T-cell (primary cell): ENCODE measurements at regions of chr17 and their contacts with region 1.

Region 1: GRCh38 chr17:73192894-73193701 is at the start of gene COG1:
- DNase-seq: peak; percentile 60 to 93 (median 83)
- ATAC-seq: peak; percentile 89 to 95 (median 90)
- H3K4me3 ChIP-seq: peak within 1 kb of the TSS; percentile 81 to 89
- H3K4me3 Mint-ChIP-seq: peak within 1 kb of the TSS; percentile 94 to 97 (median 96)
- H3K27ac ChIP-seq: peak within 1 kb of the TSS; percentile 75
- H3K27ac Mint-ChIP-seq: peak within 1 kb of the TSS; percentile 95
- H3K4me1 ChIP-seq: peaks cover 8 to 31% of the 10 kb centered on the region in 2 experiments
- H3K4me1 Mint-ChIP-seq: peaks cover 29 to 41% (median 34%) of the 10 kb centered on the region in 3 donors
- H3K27me3 ChIP-seq: no peaks in the 10 kb centered on the region
- H3K27me3 Mint-ChIP-seq: no peaks in the 10 kb centered on the region
- total RNA-seq, gene COG1: 66.3 to 77.2 (median 73.3) TPM

Region 2: GRCh38 chr17:73099511-73099910 is 93.6 kb before region 1 on chr17:
- CTCF ChIA-PET with region 1: interaction called in 1 of 2 experiments, 12 read pairs
- POLR2A ChIA-PET with region 1: no interaction called
- DNase-seq: no peak
- ATAC-seq: no peak
- H3K4me3 ChIP-seq: no peak overlapping the region
- H3K4me3 Mint-ChIP-seq: no peak overlapping the region
- H3K27ac ChIP-seq: no peak overlapping the region
- H3K27ac Mint-ChIP-seq: no peak overlapping the region
- H3K4me1 ChIP-seq: no peaks in the 10 kb centered on the region
- H3K4me1 Mint-ChIP-seq: no peaks in the 10 kb centered on the region
- H3K27me3 ChIP-seq: peaks cover 0 to 17% of the 10 kb centered on the region in 2 experiments
- H3K27me3 Mint-ChIP-seq: peaks cover 17% of the 10 kb centered on the region in 2 donors

Region 3: GRCh38 chr17:73211745-73212144 is 18.6 kb after region 1 on chr17:
- CTCF ChIA-PET with region 1: interaction called in 1 of 2 experiments, 11 read pairs
- POLR2A ChIA-PET with region 1: interaction called in 1 of 2 experiments, 4 read pairs
- DNase-seq: peak; percentile 51 to 86 (median 73)
- ATAC-seq: peak; percentile 31 to 88 (median 84)
- H3K4me3 ChIP-seq: peak overlapping the region in 1 of 2 donors; percentile 5
- H3K4me3 Mint-ChIP-seq: peak overlapping the region; percentile 55 to 74 (median 68)
- H3K27ac ChIP-seq: peak overlapping the region; percentile 30
- H3K27ac Mint-ChIP-seq: peak overlapping the region; percentile 93 to 94
- H3K4me1 ChIP-seq: peaks cover 4 to 20% of the 10 kb centered on the region in 2 experiments
- H3K4me1 Mint-ChIP-seq: peaks cover 35 to 49% (median 40%) of the 10 kb centered on the region in 3 donors
- H3K27me3 ChIP-seq: no peaks in the 10 kb centered on the region
- H3K27me3 Mint-ChIP-seq: no peaks in the 10 kb centered on the region

Region 4: DNA sequence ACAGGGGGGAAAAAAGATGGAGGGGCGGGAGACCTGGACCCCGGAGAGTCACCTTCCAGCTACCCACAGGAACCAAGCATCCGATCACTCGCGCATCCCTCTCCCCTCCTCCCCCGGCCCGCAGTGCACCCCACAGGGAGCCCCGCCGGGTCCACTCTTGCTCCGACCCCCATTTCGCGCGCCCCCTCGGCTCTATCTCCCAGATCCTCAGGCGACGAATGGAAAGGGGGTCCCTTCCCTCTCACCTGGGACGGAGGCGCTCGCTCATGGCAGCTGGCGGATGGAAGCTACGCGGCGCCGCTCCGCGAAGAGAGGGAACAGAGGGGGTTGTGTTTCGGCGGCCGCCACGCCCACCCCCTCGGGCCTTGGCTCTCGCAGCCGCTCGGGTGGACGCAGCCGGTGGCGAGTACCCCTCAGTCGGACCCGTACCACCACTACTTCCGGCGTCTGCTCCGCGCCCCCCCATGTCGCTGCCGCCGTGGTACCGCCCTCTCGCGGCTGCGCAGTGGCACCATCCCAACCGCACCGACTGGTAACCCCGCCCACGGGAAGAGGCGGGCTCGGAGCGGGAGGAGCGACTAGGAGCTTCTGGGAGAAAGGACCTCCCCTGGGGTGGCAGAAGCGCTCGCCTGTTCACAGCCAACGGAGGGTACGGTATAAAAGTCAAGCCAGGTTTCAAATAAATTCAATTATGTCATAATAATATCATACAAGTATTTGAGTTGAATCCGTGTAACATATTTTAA is 38.9 kb after region 1 on chr17:
- CTCF ChIA-PET with region 1: interaction called, 6 to 16 read pairs
- POLR2A ChIA-PET with region 1: interaction called, 3 to 5 read pairs
- DNase-seq: peak; percentile 91 to 98 (median 95)
- ATAC-seq: peak; percentile 92 to 96 (median 94)
- H3K4me3 ChIP-seq: peak overlapping the region; percentile 74 to 100
- H3K4me3 Mint-ChIP-seq: peak overlapping the region; percentile 92 to 97 (median 95)
- H3K27ac ChIP-seq: peak overlapping the region; percentile 59
- H3K27ac Mint-ChIP-seq: peak overlapping the region; percentile 96 to 98
- H3K4me1 ChIP-seq: peaks cover 6 to 44% of the 10 kb centered on the region in 2 experiments
- H3K4me1 Mint-ChIP-seq: peaks cover 68 to 74% (median 70%) of the 10 kb centered on the region in 3 donors
- H3K27me3 ChIP-seq: no peaks in the 10 kb centered on the region
- H3K27me3 Mint-ChIP-seq: no peaks in the 10 kb centered on the region